CD8-positive, alpha-beta memory T cell (primary cell): ENCODE measurements at regions of chr3 and their contacts with region 1.

Region 1: DNA sequence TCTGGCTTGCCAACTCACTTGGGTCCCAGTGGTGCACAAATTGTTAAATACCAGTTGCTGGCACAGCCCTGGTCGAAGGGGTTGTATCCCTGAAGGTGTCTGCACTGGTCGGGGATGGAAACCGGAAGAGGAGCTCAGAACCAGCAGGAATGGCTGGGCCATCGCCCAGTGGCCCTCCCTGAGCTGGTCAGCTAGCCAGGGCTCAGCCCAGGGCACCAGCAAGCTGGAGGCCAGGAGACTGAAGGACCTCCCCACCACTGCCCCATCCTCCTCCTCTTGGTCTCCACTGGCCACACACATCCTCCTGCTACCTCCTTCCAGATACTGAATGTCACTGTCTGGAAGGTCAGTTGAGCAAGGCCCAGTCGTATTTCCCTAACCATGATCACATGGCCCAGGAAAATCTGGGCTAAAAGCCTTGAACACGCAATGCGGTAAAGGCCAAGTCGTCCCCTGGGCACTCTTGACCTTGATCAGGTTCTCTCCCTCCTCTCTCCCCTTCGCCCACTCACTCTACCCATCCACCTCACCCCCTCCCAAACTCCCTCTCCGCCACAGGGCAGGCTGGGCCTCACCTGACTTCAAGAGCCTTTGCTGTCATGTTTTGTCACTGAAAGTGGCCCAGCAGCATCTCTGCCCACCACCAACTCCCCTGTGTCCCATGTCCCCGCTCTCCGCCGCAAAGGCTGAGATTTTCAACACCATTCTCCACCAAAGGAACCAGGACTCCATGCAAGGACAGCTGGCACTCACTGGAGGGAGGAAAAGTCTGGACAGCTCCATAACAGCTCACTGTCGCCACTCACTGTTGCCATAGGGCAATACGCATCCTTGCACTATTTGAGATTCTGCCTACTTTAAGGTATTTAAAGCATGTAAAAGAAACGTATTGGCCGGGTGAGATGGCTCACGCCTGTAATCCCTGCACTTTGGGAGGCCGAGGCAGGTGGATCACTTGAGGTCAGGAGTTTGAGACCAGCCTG is 12.1 kb downstream of the ZDHHC19 start:
- DNase-seq: no peak
- H3K4me3 ChIP-seq: no peak overlapping the region
- H3K4me3 Mint-ChIP-seq: no peak overlapping the region
- H3K27ac ChIP-seq: no peak overlapping the region
- H3K27ac Mint-ChIP-seq: peak overlapping the region in 2 of 8 donors; percentile 5 to 32
- H3K4me1 ChIP-seq: peaks cover 11% of the 10 kb centered on the region
- H3K4me1 Mint-ChIP-seq: peaks cover 0 to 17% (median 16%) of the 10 kb centered on the region in 3 donors
- H3K27me3 ChIP-seq: no peaks in the 10 kb centered on the region
- H3K27me3 Mint-ChIP-seq: peaks cover 1 to 11% of the 10 kb centered on the region in 2 donors

Region 2: DNA sequence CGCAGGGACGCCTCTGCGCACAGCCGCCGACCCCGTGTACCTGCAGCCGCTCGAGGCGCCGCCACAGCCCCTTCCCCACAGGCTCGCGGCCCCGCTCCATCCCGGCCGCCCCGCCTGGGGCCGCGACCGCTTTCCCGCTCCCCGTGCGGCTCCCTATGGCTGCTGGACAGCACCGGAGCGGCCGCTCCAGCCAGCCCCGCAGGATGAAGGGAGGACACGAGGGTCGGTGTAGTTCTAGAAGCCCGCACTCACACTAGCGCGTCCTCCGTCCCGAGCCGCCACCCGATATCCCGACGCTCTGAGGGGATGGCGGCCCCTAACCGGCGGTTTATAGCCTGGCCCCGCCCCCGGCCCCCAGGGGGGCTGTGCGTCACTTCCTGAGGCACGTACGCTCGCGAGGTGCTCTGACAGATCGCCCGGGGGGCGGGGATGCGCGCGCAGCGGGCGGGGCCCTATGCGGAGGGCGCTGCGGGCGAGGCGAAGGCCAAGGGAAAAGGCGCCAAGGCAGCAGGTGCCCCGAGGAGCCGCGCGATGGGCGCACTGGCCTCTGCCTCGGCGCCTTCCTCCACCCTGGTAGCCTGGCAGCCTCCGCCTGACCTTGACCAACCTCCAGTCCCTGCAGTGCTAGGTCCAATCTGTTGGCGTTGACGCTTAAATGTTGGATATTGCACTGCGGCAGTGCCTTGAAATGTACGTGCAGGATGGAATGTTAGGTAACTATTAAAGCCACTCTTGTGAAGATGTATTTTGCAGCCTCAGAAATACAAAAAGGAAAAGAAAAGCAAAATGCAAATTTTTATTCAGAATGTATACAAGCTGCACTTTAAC is 117.1 kb before region 1 on chr3 and contains the start of gene TFRC:
- CTCF ChIA-PET with region 1: interaction called, 263 read pairs
- POLR2A ChIA-PET with region 1: no interaction called
- DNase-seq: peak; percentile 93 to 96 (median 95)
- H3K4me3 ChIP-seq: peak within 1 kb of the TSS; percentile 62
- H3K4me3 Mint-ChIP-seq: peak within 1 kb of the TSS; percentile 93 to 98 (median 96)
- H3K27ac ChIP-seq: peak within 1 kb of the TSS; percentile 99
- H3K27ac Mint-ChIP-seq: peak within 1 kb of the TSS; percentile 89 to 98 (median 96)
- H3K4me1 ChIP-seq: peaks cover 34% of the 10 kb centered on the region
- H3K4me1 Mint-ChIP-seq: peaks cover 35 to 46% (median 37%) of the 10 kb centered on the region in 3 donors
- H3K27me3 ChIP-seq: no peaks in the 10 kb centered on the region
- H3K27me3 Mint-ChIP-seq: peaks cover 0 to 1% of the 10 kb centered on the region in 2 donors
- total RNA-seq, gene TFRC: 669 to 687 TPM

Region 3: DNA sequence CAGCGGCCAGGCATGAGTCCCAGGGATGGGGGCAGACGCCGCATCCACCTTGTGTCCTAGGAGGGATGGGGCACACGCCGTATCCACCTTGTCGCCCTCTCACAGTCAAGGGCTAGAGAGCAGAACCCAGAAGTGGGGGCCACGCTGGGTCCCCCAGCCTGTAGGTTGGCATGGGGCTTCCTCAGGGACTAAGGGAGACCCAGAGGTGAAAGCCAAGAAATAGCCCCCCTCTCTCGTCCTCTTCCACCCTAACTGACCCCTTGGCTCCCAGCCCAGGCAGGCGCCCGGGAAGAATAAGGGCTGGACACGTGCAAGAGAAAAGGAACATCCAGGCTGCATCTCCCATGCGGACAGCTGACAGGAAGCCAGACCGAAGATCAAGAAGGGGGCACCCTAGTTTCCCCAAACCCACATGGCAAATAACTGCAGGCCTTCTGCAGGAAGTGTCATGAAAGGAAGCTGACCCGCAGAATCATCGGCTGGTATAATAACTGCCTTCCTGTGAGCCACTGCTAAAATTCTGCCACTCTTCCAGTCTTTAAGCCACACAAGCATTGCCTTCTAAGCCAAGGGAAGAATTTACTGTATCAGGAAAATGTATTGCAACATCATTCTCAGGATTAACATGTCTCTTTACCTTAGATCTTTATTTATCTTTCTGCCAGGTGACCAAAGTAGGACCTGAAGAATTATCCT is 78.6 kb before region 1 on chr3:
- CTCF ChIA-PET with region 1: interaction called, 19 read pairs
- POLR2A ChIA-PET with region 1: no interaction called
- DNase-seq: no peak
- H3K4me3 ChIP-seq: no peak overlapping the region
- H3K4me3 Mint-ChIP-seq: peak overlapping the region in 4 of 7 donors; percentile 38 to 66 (median 60)
- H3K27ac ChIP-seq: no peak overlapping the region
- H3K27ac Mint-ChIP-seq: peak overlapping the region in 4 of 8 donors; percentile 32 to 81 (median 72)
- H3K4me1 ChIP-seq: peaks cover 21% of the 10 kb centered on the region
- H3K4me1 Mint-ChIP-seq: peaks cover 30 to 45% (median 36%) of the 10 kb centered on the region in 3 donors
- H3K27me3 ChIP-seq: no peaks in the 10 kb centered on the region
- H3K27me3 Mint-ChIP-seq: no peaks in the 10 kb centered on the region

Region 4: DNA sequence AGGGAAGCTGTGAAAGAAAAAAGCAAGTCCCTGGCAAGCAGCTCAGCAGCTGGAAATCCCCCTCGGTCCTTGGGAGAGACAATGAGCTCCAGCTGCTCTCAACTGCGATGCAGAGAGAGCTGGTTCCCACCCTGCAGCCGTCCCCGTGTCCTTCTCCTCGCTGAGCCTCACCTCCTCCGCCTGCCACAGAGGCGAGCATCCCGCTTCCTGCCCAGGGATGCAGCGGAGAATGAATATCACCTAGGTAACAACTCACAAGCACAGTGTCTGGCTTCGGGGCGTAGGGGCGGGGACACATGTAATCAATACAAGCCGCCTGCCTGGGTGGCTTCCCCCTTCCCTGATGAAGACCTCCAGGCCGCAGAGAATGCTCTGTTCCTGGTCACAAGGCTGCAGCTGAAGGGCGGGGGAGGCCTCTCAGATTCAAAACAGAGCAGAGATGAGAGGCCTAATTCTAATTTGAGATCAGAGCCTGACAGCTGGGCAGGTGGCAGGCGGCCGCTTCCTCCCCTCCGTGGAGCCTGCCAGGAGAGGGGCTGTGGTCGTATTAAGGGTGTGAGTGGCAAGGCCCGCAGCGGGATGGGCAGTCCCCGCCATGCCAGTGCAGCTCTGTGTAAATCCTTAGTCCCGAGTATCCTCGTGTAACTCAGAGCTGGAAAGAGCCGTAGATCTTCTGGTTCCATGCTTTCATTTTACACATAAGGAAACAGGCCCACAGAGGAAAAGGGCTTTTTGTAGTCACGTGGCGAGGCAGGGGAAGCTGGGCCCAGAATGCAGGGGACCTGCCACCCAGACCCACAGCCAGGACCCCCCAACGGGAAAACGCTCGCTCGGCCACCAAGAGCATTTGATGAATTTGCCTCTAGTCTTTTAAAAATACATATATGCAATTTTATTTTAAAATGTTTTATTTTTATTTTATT is 12.2 kb before region 1 on chr3:
- CTCF ChIA-PET with region 1: interaction called, 16 read pairs
- POLR2A ChIA-PET with region 1: no interaction called
- DNase-seq: peak in 1 of 5 donors; percentile 35
- H3K4me3 ChIP-seq: peak overlapping the region; percentile 19
- H3K4me3 Mint-ChIP-seq: peak overlapping the region in 6 of 7 donors; percentile 58 to 87 (median 70)
- H3K27ac ChIP-seq: peak overlapping the region; percentile 16
- H3K27ac Mint-ChIP-seq: peak overlapping the region; percentile 66 to 96 (median 88)
- H3K4me1 ChIP-seq: peaks cover 25% of the 10 kb centered on the region
- H3K4me1 Mint-ChIP-seq: peaks cover 32 to 43% (median 36%) of the 10 kb centered on the region in 3 donors
- H3K27me3 ChIP-seq: no peaks in the 10 kb centered on the region
- H3K27me3 Mint-ChIP-seq: peaks cover 0 to 2% of the 10 kb centered on the region in 2 donors